Heart left ventricle (tissue), 16 donors: ENCODE measurements at regions of chr5 and their contacts with region 1.

Region 1: DNA sequence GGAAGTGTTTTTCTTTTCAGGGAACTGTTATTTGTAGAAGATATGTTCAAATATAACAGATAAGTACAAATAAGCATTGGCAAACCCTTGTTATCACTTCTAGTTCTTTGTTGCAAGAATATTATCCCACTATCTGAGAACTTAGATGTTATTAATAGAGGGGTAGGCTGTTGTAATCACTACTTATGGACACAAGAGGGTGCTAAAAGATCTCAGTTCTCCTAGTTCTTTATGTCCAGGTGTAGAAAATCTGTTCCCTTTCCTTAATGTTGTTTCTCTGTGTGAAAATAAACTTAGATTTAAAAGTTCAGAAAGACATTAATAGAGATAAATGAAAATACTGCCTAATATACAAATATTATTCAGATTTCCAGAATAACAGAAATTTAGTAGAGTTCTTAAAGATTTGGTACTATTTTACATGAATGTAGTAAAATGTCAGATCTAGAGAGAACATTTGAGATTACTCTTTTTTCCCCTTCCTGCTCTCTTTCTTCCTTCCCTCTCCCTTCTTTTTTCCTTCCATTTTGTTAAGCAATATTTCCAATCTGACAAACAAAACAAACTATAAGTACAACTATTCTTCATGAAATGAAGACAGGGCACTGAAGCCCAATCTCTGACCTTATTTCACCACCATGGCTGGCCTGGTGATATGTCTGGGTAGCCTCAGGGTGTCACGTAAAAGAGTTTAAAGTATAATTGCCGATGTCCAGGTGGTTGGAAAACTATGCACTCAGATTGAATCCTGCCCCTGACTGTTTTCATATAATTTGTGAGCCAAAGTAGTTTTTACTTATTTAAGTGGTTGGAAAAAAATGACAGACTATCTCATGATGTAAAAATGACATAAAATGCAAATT is 43.6 kb upstream of the C5orf46 start:
- DNase-seq: no peak
- ATAC-seq: peak in 1 of 4 donors; percentile 57
- H3K4me3 ChIP-seq: no peak overlapping the region
- H3K27ac ChIP-seq: no peak overlapping the region
- H3K4me1 ChIP-seq: no peaks in the 10 kb centered on the region
- H3K27me3 ChIP-seq: no peaks in the 10 kb centered on the region
- CTCF ChIP-seq: peak; percentile 54 to 78 (median 71)
- POLR2A ChIP-seq: no peak

Region 2: DNA sequence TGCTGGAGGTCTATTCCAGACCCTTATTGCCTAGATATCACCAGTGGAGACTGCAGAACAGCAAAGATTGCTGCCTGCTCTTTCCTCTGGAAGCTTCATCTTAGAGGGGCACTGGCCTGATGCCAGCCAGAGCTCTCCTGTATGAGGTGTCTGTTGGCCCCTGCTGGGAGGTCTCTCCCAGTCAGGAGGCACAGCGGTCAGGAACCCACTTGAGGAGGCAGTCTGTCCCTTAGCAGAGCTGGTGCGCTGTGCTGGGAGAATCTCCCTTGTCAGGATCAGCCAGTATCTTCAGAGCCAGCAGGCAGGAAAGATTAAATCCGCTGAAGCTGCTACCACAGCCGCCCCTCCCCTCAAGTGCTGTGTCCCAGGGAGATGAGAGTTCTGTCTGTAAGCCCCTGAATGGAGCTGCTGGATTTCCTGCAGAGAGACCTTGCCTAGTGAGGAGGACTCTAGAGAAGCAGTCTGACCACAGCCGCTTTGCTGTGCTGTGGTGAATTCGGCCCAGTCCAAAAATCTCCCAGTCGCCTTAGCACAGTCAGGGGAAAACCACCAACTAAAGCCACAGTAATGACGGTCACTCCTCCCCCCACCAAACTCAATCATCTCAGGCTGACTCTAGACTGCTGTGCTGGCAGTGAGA is 291.5 kb before region 1 on chr5:
- intact Hi-C with region 1: no loop called
- DNase-seq: no peak
- ATAC-seq: no peak
- H3K4me3 ChIP-seq: no peak overlapping the region
- H3K27ac ChIP-seq: no peak overlapping the region
- H3K4me1 ChIP-seq: no peaks in the 10 kb centered on the region
- H3K27me3 ChIP-seq: no peaks in the 10 kb centered on the region
- CTCF ChIP-seq: no peak
- POLR2A ChIP-seq: no peak

Region 3: DNA sequence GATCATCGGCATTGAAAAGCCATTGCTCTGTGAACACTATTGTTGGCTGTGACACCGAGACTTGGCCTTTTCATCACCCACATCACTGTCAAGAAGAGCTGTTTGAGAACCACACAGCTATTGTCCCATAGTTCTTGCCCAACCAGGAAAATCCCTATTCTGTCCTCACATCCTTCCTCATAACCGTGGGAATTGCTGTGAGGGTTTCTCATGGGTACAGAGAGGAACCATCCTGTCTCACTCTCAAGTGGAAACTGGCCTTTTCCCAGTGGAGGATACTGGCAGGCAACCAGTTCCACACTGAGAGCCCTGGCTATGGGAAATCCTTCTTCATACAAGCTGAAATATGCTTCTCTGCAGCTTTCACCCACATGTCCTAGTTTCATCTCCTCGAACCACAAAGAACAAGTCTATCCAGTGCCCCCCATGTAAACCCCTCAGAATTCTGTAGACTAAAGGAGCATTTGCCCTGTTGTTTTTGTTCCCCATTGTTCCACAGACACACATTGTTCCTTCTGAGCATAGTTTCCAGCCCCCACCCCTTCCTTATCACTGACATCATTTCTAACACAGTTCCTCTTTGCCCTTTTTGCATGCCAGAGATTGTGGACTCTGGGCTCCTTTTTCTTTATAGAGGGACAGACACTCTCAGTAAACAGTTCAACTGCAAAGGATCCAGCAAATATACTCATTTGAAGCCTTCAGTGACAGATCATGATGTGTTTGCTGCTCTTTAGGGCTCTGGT is 14.2 kb after region 1 on chr5:
- intact Hi-C with region 1: no loop called
- DNase-seq: peak in 3 of 5 donors; percentile 28 to 33 (median 30)
- ATAC-seq: peak; percentile 80 to 92 (median 86)
- H3K4me3 ChIP-seq: no peak overlapping the region
- H3K27ac ChIP-seq: peak overlapping the region; percentile 50 to 92 (median 72)
- H3K4me1 ChIP-seq: peaks cover 0 to 27% (median 7%) of the 10 kb centered on the region in 12 donors
- H3K27me3 ChIP-seq: no peaks in the 10 kb centered on the region
- CTCF ChIP-seq: no peak
- POLR2A ChIP-seq: no peak

Region 4: DNA sequence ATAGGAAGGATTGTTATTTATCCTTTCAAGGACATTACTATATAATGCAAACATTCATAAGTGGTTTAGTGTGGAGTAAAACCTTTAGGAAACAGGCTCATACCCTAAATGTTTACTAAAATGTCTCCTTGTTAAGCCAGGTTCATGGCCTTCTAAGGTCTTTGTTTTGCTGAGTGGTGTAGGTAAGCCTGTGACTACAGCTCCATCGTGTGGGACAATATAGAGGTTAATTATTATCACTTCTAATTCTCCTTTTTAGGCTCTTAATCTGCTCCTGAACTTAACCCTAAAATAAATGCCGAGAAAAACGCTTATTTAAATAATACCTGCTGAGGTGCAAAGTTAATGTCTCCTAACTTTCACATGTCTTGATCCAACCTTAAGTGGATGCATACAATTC is 157.7 kb after region 1 on chr5:
- intact Hi-C with region 1: loop called in 5 of 10 experiments (anchors 5 kb)
- DNase-seq: no peak
- ATAC-seq: no peak
- H3K4me3 ChIP-seq: no peak overlapping the region
- H3K27ac ChIP-seq: no peak overlapping the region
- H3K4me1 ChIP-seq: no peaks in the 10 kb centered on the region
- H3K27me3 ChIP-seq: no peaks in the 10 kb centered on the region
- CTCF ChIP-seq: peak in 7 of 12 donors; percentile 23 to 42 (median 33)
- POLR2A ChIP-seq: no peak

Region 5: GRCh38 chr5:148120317-148120716 is 170.4 kb after region 1 on chr5:
- intact Hi-C with region 1: loop called in 8 of 10 experiments (anchors 2 to 5 kb)
- DNase-seq: no peak
- ATAC-seq: no peak
- H3K4me3 ChIP-seq: no peak overlapping the region
- H3K27ac ChIP-seq: no peak overlapping the region
- H3K4me1 ChIP-seq: no peaks in the 10 kb centered on the region
- H3K27me3 ChIP-seq: no peaks in the 10 kb centered on the region
- CTCF ChIP-seq: no peak
- POLR2A ChIP-seq: no peak